Heart right ventricle (tissue), 16 donors: ENCODE measurements at regions of chr3 and their contacts with region 1.

Region 1: DNA sequence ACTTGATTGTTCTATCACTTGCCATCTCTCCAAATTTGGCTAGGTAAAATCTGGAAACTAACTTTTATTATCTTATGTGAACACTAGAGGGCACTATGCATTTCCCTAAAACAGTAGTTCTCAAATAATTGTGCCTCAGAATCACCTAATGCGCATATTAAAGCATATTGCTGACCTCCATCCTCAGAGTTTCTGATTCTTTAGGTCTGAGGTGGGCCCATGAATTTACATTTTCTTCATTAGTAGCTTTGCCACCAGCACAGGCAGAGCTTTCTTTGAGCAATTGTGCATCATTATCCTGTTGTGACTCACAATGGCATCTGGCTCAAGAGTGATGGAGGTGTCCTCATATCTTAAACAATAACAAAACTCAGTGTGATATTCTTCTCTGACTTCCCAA is 17.5 kb upstream of the BCHE start:
- DNase-seq: no peak
- ATAC-seq: no peak
- H3K4me3 ChIP-seq: no peak overlapping the region
- H3K27ac ChIP-seq: no peak overlapping the region
- H3K4me1 ChIP-seq: no peaks in the 10 kb centered on the region
- H3K27me3 ChIP-seq: no peaks in the 10 kb centered on the region
- CTCF ChIP-seq: peak; percentile 6 to 65 (median 50)

Region 2: DNA sequence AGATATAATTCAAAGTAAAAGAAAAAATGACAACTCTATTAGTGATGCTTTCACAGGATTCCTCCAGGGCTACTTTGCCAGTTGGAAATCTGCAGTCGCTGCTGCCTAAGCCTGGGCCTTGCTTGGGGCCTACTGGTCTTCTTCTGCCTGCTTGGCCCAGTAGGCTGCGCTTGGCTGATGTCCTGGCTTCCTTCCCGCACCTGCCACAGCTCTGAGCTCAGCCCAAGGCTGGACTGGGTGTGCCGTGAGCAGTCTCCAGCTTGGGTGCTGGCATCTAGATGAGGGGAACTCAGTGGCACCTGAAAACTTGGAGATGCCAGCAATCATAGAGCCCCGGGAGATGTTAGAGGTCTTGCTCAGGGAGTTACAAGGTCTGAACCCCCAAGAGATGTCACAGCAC is 125.8 kb before region 1 on chr3:
- intact Hi-C with region 1: loop called in 1 of 10 experiments (anchors 1 kb)
- DNase-seq: no peak
- ATAC-seq: no peak
- H3K4me3 ChIP-seq: no peak overlapping the region
- H3K27ac ChIP-seq: no peak overlapping the region
- H3K4me1 ChIP-seq: no peaks in the 10 kb centered on the region
- H3K27me3 ChIP-seq: no peaks in the 10 kb centered on the region
- CTCF ChIP-seq: no peak